Dorsolateral prefrontal cortex (tissue), 120 donors: ENCODE measurements at regions of chr1 and their contacts with region 1.

Region 1: DNA sequence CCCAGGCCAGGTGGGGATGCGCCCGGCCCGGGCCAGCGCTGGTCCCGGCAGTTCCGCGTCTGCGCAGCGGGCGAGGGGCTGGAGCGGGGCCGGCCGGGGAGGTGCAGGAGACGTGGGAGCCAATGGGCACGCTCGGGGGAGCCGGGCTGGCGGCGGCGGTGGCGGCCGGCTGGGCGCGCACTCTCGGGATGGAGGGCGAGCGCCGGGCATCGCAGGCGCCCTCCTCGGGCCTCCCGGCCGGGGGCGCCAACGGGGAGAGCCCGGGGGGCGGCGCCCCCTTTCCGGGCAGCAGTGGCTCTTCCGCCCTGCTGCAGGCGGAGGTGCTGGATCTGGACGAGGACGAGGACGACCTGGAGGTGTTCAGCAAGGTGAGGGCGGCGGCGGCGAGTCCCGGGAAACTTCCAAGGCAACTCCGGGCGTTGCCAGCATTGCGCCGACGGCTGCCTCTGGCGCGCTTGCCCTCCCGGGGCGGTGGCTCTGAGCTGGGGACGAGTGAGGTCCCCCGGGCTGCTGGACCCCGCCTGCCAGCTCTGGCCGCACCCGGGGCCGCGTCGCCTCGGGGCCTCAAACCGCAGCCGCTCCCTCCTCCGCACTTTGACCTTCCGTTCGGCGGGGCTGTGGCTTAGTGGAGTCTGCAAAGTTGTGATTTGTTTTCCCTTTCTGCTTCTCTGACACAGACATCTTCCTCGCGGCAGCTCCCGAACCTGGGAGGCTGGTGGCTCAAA is at the start of gene SNX7:
- DNase-seq: peak; percentile 26 to 90 (median 62)
- H3K4me3 ChIP-seq: peak within 1 kb of the TSS; percentile 65 to 94 (median 84)
- H3K27ac ChIP-seq: peak within 1 kb of the TSS in 57 of 59 donors; percentile 3 to 89 (median 78)
- H3K27me3 ChIP-seq: no peaks in the 10 kb centered on the region
- CTCF ChIP-seq: peak in 25 of 56 donors; percentile 6 to 54 (median 25)
- total RNA-seq, gene SNX7: 7.2 to 19.6 (median 12.7) TPM

Region 2: GRCh38 chr1:98496246-98496995 is 165.3 kb before region 1 on chr1:
- intact Hi-C with region 1: no loop called
- DNase-seq: no peak
- H3K4me3 ChIP-seq: no peak overlapping the region
- H3K27ac ChIP-seq: no peak overlapping the region
- H3K27me3 ChIP-seq: no peaks in the 10 kb centered on the region
- CTCF ChIP-seq: no peak

Region 3: DNA sequence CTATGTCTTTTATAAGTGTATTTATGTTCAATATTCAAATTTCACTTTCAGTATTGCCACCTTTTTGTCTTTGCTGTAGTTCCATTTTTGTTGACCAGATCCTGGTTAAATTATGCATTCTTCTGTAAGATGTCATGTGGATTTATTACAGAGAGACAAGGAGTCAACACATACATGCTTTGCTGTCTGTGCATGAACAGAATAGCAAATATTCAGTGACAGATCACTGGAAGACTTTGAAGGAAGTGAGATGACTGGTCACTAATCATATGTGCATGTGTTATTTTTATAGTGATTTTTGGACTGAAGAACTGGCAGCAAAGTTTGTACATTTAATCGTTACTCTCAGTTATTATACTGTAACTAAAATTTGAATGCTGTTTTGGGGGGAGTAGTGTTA is 225.8 kb after region 1 on chr1:
- intact Hi-C with region 1: no loop called
- DNase-seq: no peak
- H3K4me3 ChIP-seq: no peak overlapping the region
- H3K27ac ChIP-seq: no peak overlapping the region
- H3K27me3 ChIP-seq: no peaks in the 10 kb centered on the region
- CTCF ChIP-seq: no peak

Region 4: DNA sequence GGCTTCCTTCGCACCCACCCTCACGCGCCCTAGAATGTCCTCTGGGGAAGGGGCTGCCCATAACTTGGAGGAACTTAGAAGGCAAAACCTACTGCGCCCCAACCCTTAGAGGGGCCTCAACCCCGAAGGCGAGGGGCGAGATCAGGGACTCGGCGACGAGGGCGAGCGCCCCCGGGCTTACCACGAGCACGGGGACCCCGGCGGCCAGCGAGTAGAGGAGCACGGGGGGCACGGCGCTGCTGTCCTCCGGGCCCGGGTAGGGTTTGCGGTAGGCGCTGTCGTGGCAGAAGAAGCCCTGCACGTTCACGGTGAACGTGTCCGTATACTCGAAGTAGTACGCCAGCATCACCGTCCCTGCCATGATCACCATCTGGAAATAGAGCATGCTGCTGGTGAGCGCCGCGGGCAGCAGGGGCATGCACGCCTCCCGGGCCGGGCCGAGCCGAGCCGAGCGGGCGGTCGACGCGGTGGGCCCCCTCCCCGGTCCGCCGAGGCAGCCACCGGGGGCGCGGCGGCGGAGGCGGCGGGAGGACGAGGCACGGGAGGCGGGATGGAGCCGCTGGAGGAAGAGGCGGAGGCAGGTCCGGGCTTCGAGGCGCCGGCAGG is 342.7 kb after region 1 on chr1:
- intact Hi-C with region 1: loop called in 1 of 2 experiments (anchors 10 kb)
- DNase-seq: peak in 6 of 10 donors; percentile 31 to 59 (median 46)
- H3K4me3 ChIP-seq: peak overlapping the region; percentile 41 to 77 (median 63)
- H3K27ac ChIP-seq: peak overlapping the region in 57 of 59 donors; percentile 0 to 93 (median 82)
- H3K27me3 ChIP-seq: peaks cover 0 to 56% (median 6%) of the 10 kb centered on the region in 45 donors
- CTCF ChIP-seq: no peak